ENCODE measurements at regions of chr20 and their contacts with region 1.

Region 1: DNA sequence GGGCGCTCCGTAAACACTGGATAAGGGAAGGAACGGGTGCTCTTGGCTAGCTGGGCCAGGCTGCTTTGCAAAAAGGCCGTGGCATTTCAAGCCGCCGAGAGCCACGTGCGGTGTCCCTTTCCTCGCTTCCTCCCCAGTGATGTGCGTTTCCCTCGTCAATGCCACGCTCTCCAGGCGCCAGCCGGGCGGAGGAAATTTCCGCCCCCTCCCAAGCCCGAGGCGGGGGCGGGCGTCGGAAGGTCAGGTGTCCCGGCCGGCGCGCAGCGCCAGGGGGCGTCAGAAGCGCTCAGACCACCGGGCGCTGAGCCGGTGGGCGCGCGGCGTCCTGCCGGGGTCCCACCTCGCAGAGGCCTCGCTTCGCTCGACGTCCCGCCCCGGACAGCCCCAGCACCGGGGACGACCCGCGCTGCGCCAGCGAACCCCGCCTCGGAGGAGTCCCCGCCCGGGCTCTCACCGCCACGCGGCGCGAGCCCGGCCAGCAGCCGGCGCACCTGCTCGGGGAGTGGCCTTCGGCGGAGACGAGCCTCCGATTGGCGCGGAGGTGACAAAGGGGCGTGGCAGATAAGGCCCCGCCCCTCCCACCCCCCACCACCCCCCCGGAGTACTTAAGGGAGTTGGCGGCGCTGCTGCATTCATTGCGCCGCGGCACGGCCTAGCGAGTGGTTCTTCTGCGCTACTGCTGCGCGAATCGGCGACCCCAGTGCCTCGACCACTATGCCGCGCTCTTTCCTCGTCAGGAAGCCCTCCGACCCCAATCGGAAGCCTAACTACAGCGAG is at the start of gene SNAI1:
- DNase-seq: peak; percentile 84
- H3K4me3 ChIP-seq: peak within 1 kb of the TSS; percentile 49 to 97 (median 89)
- H3K27ac ChIP-seq: peak within 1 kb of the TSS; percentile 87
- H3K4me1 ChIP-seq: peaks cover 49% of the 10 kb centered on the region
- H3K27me3 ChIP-seq: no peaks in the 10 kb centered on the region
- CTCF ChIP-seq: peak; percentile 61 to 68
- POLR2A ChIP-seq: peak; percentile 99
- total RNA-seq, gene SNAI1: 13.4 and 14.5 TPM in 2 replicates

Region 2: GRCh38 chr20:50012282-50013263 is 30.0 kb after region 1 on chr20:
- CTCF ChIA-PET with region 1: interaction called, 11 read pairs
- POLR2A ChIA-PET with region 1: interaction called, 5 read pairs
- dilution Hi-C with region 1: no loop called
- intact Hi-C with region 1: no loop called
- DNase-seq: no peak
- H3K4me3 ChIP-seq: no peak overlapping the region
- H3K27ac ChIP-seq: no peak overlapping the region
- H3K4me1 ChIP-seq: peaks cover 6% of the 10 kb centered on the region
- H3K27me3 ChIP-seq: no peaks in the 10 kb centered on the region
- CTCF ChIP-seq: no peak
- POLR2A ChIP-seq: no peak

Region 3: DNA sequence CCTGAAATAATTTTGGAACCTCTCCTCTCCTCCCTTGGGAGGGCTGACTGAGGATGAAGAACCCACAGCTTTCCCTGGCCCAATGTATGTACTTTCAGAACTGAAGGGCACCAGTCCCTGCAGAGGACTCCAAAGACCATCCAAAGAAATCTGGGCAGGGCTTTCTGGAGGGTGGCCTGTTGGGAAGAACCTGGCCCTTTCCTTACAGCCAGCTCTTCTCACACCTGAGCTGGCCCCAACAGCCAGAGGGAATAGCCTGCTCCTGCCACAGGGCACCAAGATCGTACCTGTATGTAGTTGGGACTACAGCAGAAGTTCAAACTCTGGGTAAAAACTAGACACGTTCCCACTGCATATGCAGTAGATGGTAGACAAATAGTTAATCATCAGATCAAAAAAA is 97.3 kb after region 1 on chr20:
- CTCF ChIA-PET with region 1: interaction called, 1,187 read pairs
- POLR2A ChIA-PET with region 1: no interaction called
- dilution Hi-C with region 1: no loop called
- intact Hi-C with region 1: no loop called
- DNase-seq: no peak
- H3K4me3 ChIP-seq: no peak overlapping the region
- H3K27ac ChIP-seq: no peak overlapping the region
- H3K4me1 ChIP-seq: no peaks in the 10 kb centered on the region
- H3K27me3 ChIP-seq: no peaks in the 10 kb centered on the region
- CTCF ChIP-seq: no peak
- POLR2A ChIP-seq: no peak

Region 4: GRCh38 chr20:50115591-50116372 is 133.2 kb after region 1 on chr20:
- CTCF ChIA-PET with region 1: interaction called, 37 read pairs
- POLR2A ChIA-PET with region 1: no interaction called
- dilution Hi-C with region 1: no loop called
- intact Hi-C with region 1: no loop called
- DNase-seq: peak; percentile 98
- H3K4me3 ChIP-seq: peak overlapping the region; percentile 51 to 80 (median 63)
- H3K27ac ChIP-seq: peak overlapping the region; percentile 30
- H3K4me1 ChIP-seq: peaks cover 34% of the 10 kb centered on the region
- H3K27me3 ChIP-seq: no peaks in the 10 kb centered on the region
- CTCF ChIP-seq: no peak
- POLR2A ChIP-seq: peak; percentile 79

Region 5: DNA sequence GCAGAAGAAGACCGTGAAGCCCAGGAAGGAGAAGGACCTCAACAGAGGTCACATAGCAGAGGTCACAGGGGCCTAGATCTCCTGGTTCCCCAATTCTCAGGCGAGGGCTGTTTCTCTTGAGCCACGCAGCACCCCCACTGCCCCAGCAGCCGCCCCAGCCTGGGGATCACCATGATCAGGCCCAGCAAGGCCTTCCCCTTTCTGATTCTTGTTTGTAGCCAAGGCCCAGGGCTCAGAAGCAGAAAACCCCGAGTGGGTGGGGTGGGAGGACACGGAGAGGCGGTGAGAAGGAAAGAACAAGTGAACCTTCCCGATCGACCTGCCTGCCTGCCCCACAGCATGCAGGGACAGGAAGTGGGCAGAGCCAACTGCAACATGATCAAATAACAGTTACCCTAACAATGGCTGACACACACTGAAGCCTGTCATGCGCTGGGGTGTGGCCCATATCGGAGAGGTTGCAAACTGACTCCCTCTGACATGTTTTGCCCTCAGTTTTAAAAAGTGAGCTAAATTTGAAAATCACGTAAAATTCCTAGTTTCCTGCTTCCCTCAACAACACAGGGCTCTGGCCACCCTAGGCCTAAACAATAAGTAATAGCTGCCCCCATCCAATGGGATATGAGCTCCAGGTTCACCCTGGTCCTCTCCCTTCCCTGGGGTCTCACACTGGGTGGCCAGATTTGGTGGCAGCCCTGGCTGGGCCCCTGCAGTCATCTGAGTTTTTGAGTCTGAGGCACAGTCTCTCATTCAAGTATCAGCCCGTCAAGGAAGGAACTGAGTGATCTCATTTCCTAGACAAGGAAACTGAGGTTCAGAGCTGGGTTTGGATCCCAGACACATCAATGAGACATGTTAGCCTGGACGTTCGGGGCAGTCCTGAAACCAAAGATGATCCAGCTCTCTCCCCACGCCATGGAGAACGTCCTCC is 164.5 kb after region 1 on chr20:
- CTCF ChIA-PET with region 1: interaction called, 14 read pairs
- POLR2A ChIA-PET with region 1: interaction called, 7 read pairs
- dilution Hi-C with region 1: no loop called
- intact Hi-C with region 1: loop called (anchors 5 kb)
- DNase-seq: peak; percentile 84
- H3K4me3 ChIP-seq: peak overlapping the region in 1 of 3 experiments; percentile 14
- H3K27ac ChIP-seq: peak overlapping the region; percentile 96
- H3K4me1 ChIP-seq: peaks cover 82% of the 10 kb centered on the region
- H3K27me3 ChIP-seq: no peaks in the 10 kb centered on the region
- CTCF ChIP-seq: no peak
- POLR2A ChIP-seq: peak; percentile 83

Region 6: DNA sequence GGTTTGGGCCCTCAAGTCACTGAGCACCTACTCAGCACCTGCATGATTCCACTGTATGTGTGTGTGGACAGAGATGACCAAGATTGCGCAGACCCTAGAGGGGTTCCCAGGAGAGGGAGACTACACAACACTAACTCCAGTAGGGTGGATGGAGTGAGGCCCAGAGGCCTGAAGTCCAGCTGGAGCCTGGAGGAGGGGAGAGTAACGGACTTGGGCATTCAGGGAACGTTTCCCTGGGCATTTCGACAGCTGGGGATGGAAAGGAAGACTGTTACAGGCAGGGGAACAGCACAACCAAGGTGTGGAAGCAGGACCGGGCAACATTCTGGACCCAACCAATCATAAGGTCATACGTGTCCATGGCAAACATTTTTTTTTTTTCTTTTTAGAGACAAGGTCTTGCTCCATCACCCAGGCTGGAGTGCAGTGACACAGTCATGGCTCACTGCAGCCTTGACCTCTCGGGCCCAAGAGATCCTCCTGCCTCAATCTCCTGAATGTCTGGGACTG is 197.0 kb after region 1 on chr20:
- CTCF ChIA-PET with region 1: interaction called, 102 read pairs
- POLR2A ChIA-PET with region 1: no interaction called
- dilution Hi-C with region 1: no loop called
- intact Hi-C with region 1: no loop called
- DNase-seq: no peak
- H3K4me3 ChIP-seq: no peak overlapping the region
- H3K27ac ChIP-seq: no peak overlapping the region
- H3K4me1 ChIP-seq: no peaks in the 10 kb centered on the region
- H3K27me3 ChIP-seq: no peaks in the 10 kb centered on the region
- CTCF ChIP-seq: no peak
- POLR2A ChIP-seq: no peak

Measured in endothelial cell of umbilical vein (primary cell).